ENCODE measurements at regions of chrX and their contacts with region 1.

Region 1: GRCh38 chrX:104113222-104113965 is 1.1 kb downstream of the ZCCHC18 start:
- DNase-seq: peak in 1 of 2 experiments; percentile 49
- H3K4me3 ChIP-seq: peak overlapping the region; percentile 56 to 75 (median 58)
- H3K27ac ChIP-seq: no peak overlapping the region
- H3K4me1 ChIP-seq: peaks cover 0 to 9% (median 3%) of the 10 kb centered on the region in 4 experiments; a peak in 4 of 7 replicates
- H3K27me3 ChIP-seq: no peaks in the 10 kb centered on the region
- CTCF ChIP-seq: peak; percentile 43 to 52 (median 50)
- EP300 ChIP-seq: no peak
- POLR2A ChIP-seq: no peak
- RAD21 ChIP-seq: peak; percentile 32 to 55

Region 2: DNA sequence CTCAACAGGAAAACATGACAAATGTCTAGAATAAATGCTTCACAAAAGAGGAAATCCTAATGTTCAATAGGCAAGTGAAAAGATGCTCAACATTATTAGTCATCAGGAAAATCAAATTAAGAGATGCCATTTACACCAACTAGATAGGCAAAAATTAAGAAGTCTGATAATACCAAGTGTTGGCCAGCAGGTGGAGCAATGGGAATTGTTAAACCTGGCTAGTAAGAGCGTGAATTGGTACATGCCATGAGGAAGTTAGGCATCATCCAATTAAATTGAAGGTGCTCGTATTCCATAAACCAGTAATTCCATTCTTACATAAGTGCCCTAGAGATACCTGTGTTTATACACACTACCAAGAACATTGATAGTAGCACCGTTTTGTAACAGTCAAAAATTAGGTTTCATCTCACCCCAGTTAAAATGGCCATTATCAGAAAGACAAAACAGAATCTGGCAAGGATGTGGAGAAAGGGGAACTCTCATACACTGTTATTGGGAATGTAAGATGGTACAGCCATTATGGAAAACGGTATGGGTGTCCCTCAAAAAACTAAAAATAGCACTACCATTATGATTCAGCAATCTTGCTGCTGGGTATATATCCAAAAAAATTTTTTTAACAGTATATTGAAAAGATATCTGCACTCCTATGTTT is 15.1 kb before region 1 on chrX:
- CTCF ChIA-PET with region 1: interaction called, 12 read pairs
- POLR2A ChIA-PET with region 1: interaction called, 3 read pairs
- DNase-seq: no peak
- H3K4me3 ChIP-seq: no peak overlapping the region
- H3K27ac ChIP-seq: no peak overlapping the region
- H3K4me1 ChIP-seq: no peaks in the 10 kb centered on the region
- H3K27me3 ChIP-seq: no peaks in the 10 kb centered on the region
- CTCF ChIP-seq: peak in 2 of 3 experiments; percentile 44 to 50; a peak in 2 of 4 replicates
- EP300 ChIP-seq: no peak
- POLR2A ChIP-seq: no peak
- RAD21 ChIP-seq: peak; percentile 51 to 65

Region 3: GRCh38 chrX:104156630-104157529 is 43.5 kb after region 1 on chrX and contains the start of gene SLC25A53:
- CTCF ChIA-PET with region 1: no interaction called
- POLR2A ChIA-PET with region 1: interaction called, 10 read pairs
- DNase-seq: peak; percentile 64 to 71
- H3K4me3 ChIP-seq: peak within 1 kb of the TSS; percentile 63 to 88 (median 68)
- H3K27ac ChIP-seq: peak within 1 kb of the TSS; percentile 84; the same call in 1 of the 2 replicates
- H3K4me1 ChIP-seq: no peaks in the 10 kb centered on the region
- H3K27me3 ChIP-seq: no peaks in the 10 kb centered on the region
- CTCF ChIP-seq: no peak
- EP300 ChIP-seq: no peak
- POLR2A ChIP-seq: no peak
- RAD21 ChIP-seq: no peak
- total RNA-seq, gene SLC25A53: 3.2 and 4.2 TPM in 2 replicates

Measured in H1 (cell line).